ENCODE measurements at regions of chr12 and their contacts with region 1.

Region 1: DNA sequence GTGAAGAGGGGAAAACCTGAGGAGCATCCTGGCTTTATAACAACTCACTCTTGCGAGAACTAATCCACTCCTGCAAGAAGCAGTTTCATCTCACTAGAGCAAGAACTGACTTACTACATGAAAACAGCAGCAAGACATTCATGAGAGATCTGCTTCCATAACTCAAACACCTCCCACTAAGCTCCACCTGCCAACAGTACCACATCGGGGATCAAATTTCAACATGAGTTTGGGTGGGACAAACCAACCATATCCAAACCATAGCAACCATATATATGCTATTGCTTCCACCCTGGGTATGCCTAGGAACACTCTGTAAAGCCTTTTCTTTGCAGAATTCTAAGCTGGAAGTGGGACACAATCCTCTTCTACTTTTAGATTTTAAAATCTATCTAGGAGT is 13.9 kb upstream of the AVPR1A start:
- DNase-seq: no peak
- H3K4me3 ChIP-seq: no peak overlapping the region
- H3K27ac ChIP-seq: no peak overlapping the region
- H3K4me1 ChIP-seq: no peaks in the 10 kb centered on the region
- H3K27me3 ChIP-seq: no peaks in the 10 kb centered on the region; the same call in 1 of the 2 replicates
- CTCF ChIP-seq: no peak
- EP300 ChIP-seq: no peak
- RAD21 ChIP-seq: no peak

Region 2: GRCh38 chr12:63151623-63152320 is 13.1 kb before region 1 on chr12:
- CTCF ChIA-PET with region 1: interaction called, 15 read pairs
- POLR2A ChIA-PET with region 1: no interaction called
- DNase-seq: peak; percentile 61
- H3K4me3 ChIP-seq: peak overlapping the region; percentile 14 to 55; a peak in 2 of 4 replicates
- H3K27ac ChIP-seq: no peak overlapping the region
- H3K4me1 ChIP-seq: no peaks in the 10 kb centered on the region; a peak in 1 of 4 replicates
- H3K27me3 ChIP-seq: peaks cover 40% of the 10 kb centered on the region
- CTCF ChIP-seq: peak; percentile 81
- EP300 ChIP-seq: no peak
- RAD21 ChIP-seq: peak; percentile 29; the same call in 1 of the 2 replicates

Region 3: GRCh38 chr12:63179224-63179623 is 14.3 kb after region 1 on chr12:
- CTCF ChIA-PET with region 1: no interaction called
- POLR2A ChIA-PET with region 1: no interaction called
- DNase-seq: no peak
- H3K4me3 ChIP-seq: no peak overlapping the region
- H3K27ac ChIP-seq: no peak overlapping the region
- H3K4me1 ChIP-seq: no peaks in the 10 kb centered on the region
- H3K27me3 ChIP-seq: no peaks in the 10 kb centered on the region
- CTCF ChIP-seq: no peak
- EP300 ChIP-seq: no peak
- RAD21 ChIP-seq: no peak

Measured in SK-N-SH (cell line).